Activated CD4-positive, alpha-beta memory T cell treated with anti-CD3 and anti-CD28 coated beads, Interleukin-2, amount 10 ng/mL, durations not matched to agents 7 days and 5 days (primary cell): ENCODE measurements at regions of chr13 and their contacts with region 1.

Region 1: DNA sequence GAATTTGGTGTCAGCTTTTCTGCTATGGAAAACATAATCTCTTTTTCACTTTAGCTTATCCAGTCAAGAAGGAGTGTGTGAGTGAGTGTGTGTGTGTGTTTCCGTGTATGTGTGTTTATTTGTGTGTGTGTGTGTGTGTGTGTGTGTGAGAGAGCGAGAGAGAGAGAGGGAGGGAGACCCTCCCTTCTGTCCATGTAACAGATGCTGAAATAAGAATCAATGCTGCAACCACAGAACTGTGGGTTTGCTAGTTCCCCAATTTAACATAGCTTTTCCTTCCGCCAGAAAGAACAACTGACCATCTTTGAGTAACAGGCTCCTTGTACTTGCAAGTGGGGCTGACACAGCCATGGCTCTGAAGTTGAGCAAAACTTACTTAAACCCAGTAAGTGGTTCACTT is 5.2 kb downstream of the LCP1 start:
- DNase-seq: no peak
- H3K4me3 Mint-ChIP-seq: peak overlapping the region; percentile 96
- H3K27ac Mint-ChIP-seq: peak overlapping the region; percentile 68
- H3K4me1 Mint-ChIP-seq: peaks cover 66% of the 10 kb centered on the region
- H3K27me3 Mint-ChIP-seq: no peaks in the 10 kb centered on the region

Region 2: GRCh38 chr13:45925151-45925550 is 251.6 kb before region 1 on chr13:
- CTCF ChIA-PET with region 1: no interaction called
- POLR2A ChIA-PET with region 1: no interaction called
- DNase-seq: no peak
- H3K4me3 Mint-ChIP-seq: no peak overlapping the region
- H3K27ac Mint-ChIP-seq: no peak overlapping the region
- H3K4me1 Mint-ChIP-seq: no peaks in the 10 kb centered on the region
- H3K27me3 Mint-ChIP-seq: peaks cover under 1% of the 10 kb centered on the region

Region 3: GRCh38 chr13:46126552-46127357 is 50.0 kb before region 1 on chr13:
- CTCF ChIA-PET with region 1: interaction called, 6 read pairs
- POLR2A ChIA-PET with region 1: interaction called, 12 read pairs
- DNase-seq: peak; percentile 72
- H3K4me3 Mint-ChIP-seq: no peak overlapping the region
- H3K27ac Mint-ChIP-seq: peak overlapping the region; percentile 21
- H3K4me1 Mint-ChIP-seq: peaks cover 34% of the 10 kb centered on the region
- H3K27me3 Mint-ChIP-seq: no peaks in the 10 kb centered on the region

Region 4: GRCh38 chr13:46202188-46202795 is 25.5 kb after region 1 on chr13:
- CTCF ChIA-PET with region 1: interaction called, 5 read pairs
- POLR2A ChIA-PET with region 1: interaction called, 14 read pairs
- DNase-seq: no peak
- H3K4me3 Mint-ChIP-seq: no peak overlapping the region
- H3K27ac Mint-ChIP-seq: peak overlapping the region; percentile 80
- H3K4me1 Mint-ChIP-seq: peaks cover 49% of the 10 kb centered on the region
- H3K27me3 Mint-ChIP-seq: no peaks in the 10 kb centered on the region

Region 5: GRCh38 chr13:46211483-46212351 is 35.0 kb after region 1 on chr13 and contains the start of gene LRRC63:
- CTCF ChIA-PET with region 1: interaction called, 7 read pairs
- POLR2A ChIA-PET with region 1: interaction called, 23 read pairs
- DNase-seq: peak; percentile 89
- H3K4me3 Mint-ChIP-seq: peak within 1 kb of the TSS; percentile 93
- H3K27ac Mint-ChIP-seq: peak within 1 kb of the TSS; percentile 87
- H3K4me1 Mint-ChIP-seq: peaks cover 33% of the 10 kb centered on the region
- H3K27me3 Mint-ChIP-seq: no peaks in the 10 kb centered on the region
- total RNA-seq, gene LRRC63: 0.83 to 1.1 TPM

Region 6: GRCh38 chr13:46295491-46296114 is 118.8 kb after region 1 on chr13:
- CTCF ChIA-PET with region 1: interaction called, 7 read pairs
- POLR2A ChIA-PET with region 1: interaction called, 36 read pairs
- DNase-seq: peak; percentile 82
- H3K4me3 Mint-ChIP-seq: peak overlapping the region; percentile 59
- H3K27ac Mint-ChIP-seq: peak overlapping the region; percentile 98
- H3K4me1 Mint-ChIP-seq: peaks cover 41% of the 10 kb centered on the region
- H3K27me3 Mint-ChIP-seq: no peaks in the 10 kb centered on the region